WTC11 (cell line): ENCODE measurements at regions of chr7 and their contacts with region 1.

Region 1: GRCh38 chr7:134514663-134515062 is 12.7 kb upstream of the AKR1B10 start:
- DNase-seq: no peak
- ATAC-seq: peak; percentile 64
- H3K4me3 Mint-ChIP-seq: no peak overlapping the region
- H3K27ac Mint-ChIP-seq: no peak overlapping the region
- H3K4me1 Mint-ChIP-seq: peaks cover 11% of the 10 kb centered on the region
- H3K27me3 Mint-ChIP-seq: peaks cover 6% of the 10 kb centered on the region
- CTCF ChIP-seq: peak; percentile 87

Region 2: DNA sequence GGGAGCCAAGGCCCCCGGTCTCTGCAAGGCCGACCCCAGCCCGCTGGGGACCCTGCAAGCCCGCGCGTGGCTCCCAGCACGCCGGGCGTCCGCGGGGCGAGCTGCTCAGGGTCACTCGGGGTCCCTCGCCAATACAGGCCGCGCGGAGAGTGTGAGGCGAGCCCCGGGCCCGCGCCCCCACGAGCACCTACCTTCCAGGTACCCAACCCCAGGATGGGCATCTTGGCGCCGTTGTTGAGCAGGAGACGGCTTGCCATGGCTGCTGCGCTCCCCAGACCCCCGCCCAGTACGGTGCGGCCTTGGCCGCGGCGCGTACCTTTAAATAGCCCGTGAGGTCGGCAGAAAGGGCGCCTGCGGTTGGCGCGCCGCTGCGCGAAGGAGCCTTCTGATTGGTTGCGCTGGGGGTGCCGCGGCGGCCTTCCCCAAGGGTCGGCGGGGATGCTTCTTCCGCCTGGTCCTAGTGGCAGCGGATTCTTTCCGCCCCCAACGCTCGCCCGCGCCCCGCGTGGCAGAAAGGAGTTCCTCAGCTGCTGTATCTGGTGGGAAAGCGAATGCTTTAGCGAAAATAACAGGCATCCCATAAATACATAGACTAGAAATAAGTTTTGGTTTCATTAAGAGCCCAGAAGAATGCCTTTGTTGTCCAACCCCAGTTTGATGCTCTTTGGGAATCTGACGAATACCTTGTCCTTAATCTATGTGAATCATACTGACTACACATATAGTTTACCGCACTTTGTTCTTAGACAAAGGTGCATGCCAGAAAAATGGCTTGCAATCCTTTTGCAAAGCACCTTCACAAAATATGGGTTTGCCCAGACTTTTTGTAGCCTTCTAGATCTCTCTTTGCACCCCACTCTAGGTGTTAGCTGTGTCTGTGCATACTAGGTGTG is 55.6 kb before region 1 on chr7 and contains the start of gene AKR1B1:
- CTCF ChIA-PET with region 1: interaction called, 14 read pairs
- POLR2A ChIA-PET with region 1: no interaction called
- DNase-seq: peak; percentile 95
- ATAC-seq: peak; percentile 96
- H3K4me3 Mint-ChIP-seq: peak within 1 kb of the TSS; percentile 87
- H3K27ac Mint-ChIP-seq: no peak within 1 kb of the TSS
- H3K4me1 Mint-ChIP-seq: peaks cover 22% of the 10 kb centered on the region
- H3K27me3 Mint-ChIP-seq: peaks cover 19% of the 10 kb centered on the region
- CTCF ChIP-seq: no peak
- total RNA-seq, gene AKR1B1: 135 to 148 TPM (median 147 TPM) in 3 replicates

Region 3: GRCh38 chr7:134480736-134481135 is 33.9 kb before region 1 on chr7:
- CTCF ChIA-PET with region 1: interaction called, 10 read pairs
- POLR2A ChIA-PET with region 1: interaction called, 3 read pairs
- DNase-seq: no peak
- ATAC-seq: peak; percentile 76
- H3K4me3 Mint-ChIP-seq: no peak overlapping the region
- H3K27ac Mint-ChIP-seq: no peak overlapping the region
- H3K4me1 Mint-ChIP-seq: peaks cover 14% of the 10 kb centered on the region
- H3K27me3 Mint-ChIP-seq: no peaks in the 10 kb centered on the region
- CTCF ChIP-seq: no peak

Region 4: GRCh38 chr7:134547397-134548054 is 32.9 kb after region 1 on chr7:
- CTCF ChIA-PET with region 1: interaction called, 24 read pairs
- POLR2A ChIA-PET with region 1: no interaction called
- DNase-seq: peak; percentile 86
- ATAC-seq: peak; percentile 93
- H3K4me3 Mint-ChIP-seq: peak overlapping the region; percentile 73
- H3K27ac Mint-ChIP-seq: peak overlapping the region; percentile 94
- H3K4me1 Mint-ChIP-seq: peaks cover 40% of the 10 kb centered on the region
- H3K27me3 Mint-ChIP-seq: no peaks in the 10 kb centered on the region; the same call in 1 of the 2 replicates
- CTCF ChIP-seq: peak; percentile 74

Region 5: GRCh38 chr7:134553976-134554375 is 39.3 kb after region 1 on chr7:
- CTCF ChIA-PET with region 1: interaction called, 24 read pairs
- POLR2A ChIA-PET with region 1: no interaction called
- DNase-seq: peak; percentile 20
- ATAC-seq: peak; percentile 66
- H3K4me3 Mint-ChIP-seq: no peak overlapping the region
- H3K27ac Mint-ChIP-seq: no peak overlapping the region
- H3K4me1 Mint-ChIP-seq: peaks cover 8% of the 10 kb centered on the region
- H3K27me3 Mint-ChIP-seq: no peaks in the 10 kb centered on the region; the same call in 1 of the 2 replicates
- CTCF ChIP-seq: no peak

Region 6: GRCh38 chr7:134946260-134946659 is 431.6 kb after region 1 on chr7:
- CTCF ChIA-PET with region 1: no interaction called
- POLR2A ChIA-PET with region 1: no interaction called
- DNase-seq: no peak
- ATAC-seq: no peak
- H3K4me3 Mint-ChIP-seq: no peak overlapping the region
- H3K27ac Mint-ChIP-seq: no peak overlapping the region
- H3K4me1 Mint-ChIP-seq: peaks cover 10% of the 10 kb centered on the region
- H3K27me3 Mint-ChIP-seq: no peaks in the 10 kb centered on the region
- CTCF ChIP-seq: no peak